Sigmoid colon (tissue), 7 donors: ENCODE measurements at regions of chr2 and their contacts with region 1.

Region 1: DNA sequence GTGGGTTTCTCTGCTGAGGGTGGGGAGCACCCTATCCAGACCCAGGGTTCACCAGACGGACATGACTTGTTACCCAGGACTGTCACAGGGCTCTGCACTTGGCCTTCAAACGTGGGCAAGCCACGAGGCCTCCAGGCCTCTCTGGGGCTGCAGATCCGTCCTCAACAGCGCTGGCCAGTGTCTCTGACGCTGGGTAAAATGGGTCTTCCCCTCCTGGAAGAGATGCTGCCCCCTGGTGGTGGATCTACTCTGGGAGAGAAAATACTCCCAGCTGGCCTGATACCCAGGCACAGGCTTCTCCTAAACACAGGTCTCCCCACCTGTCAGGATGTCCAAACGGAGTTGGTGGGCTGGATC is 3.7 kb downstream of the GPR17 start:
- DNase-seq: peak; percentile 94
- H3K4me3 ChIP-seq: peak overlapping the region in 2 of 4 donors; percentile 8 to 36
- H3K27ac ChIP-seq: peak overlapping the region; percentile 86 to 97 (median 92)
- H3K4me1 ChIP-seq: peaks cover 0 to 99% (median 94%) of the 10 kb centered on the region in 4 donors
- H3K27me3 ChIP-seq: no peaks in the 10 kb centered on the region
- CTCF ChIP-seq: peak in 3 of 4 experiments; percentile 74 to 82 (median 80)
- EP300 ChIP-seq: no peak
- POLR2A ChIP-seq: no peak

Region 2: GRCh38 chr2:127576433-127577207 is 73.0 kb before region 1 on chr2:
- intact Hi-C with region 1: no loop called
- DNase-seq: peak; percentile 75
- H3K4me3 ChIP-seq: no peak overlapping the region
- H3K27ac ChIP-seq: peak overlapping the region in 1 of 4 donors; percentile 42
- H3K4me1 ChIP-seq: peaks cover 0 to 13% (median 8%) of the 10 kb centered on the region in 4 donors
- H3K27me3 ChIP-seq: no peaks in the 10 kb centered on the region
- CTCF ChIP-seq: no peak
- EP300 ChIP-seq: no peak
- POLR2A ChIP-seq: no peak

Region 3: GRCh38 chr2:127637725-127638252 is 11.9 kb before region 1 on chr2:
- intact Hi-C with region 1: loop called (anchors 2 kb)
- DNase-seq: no peak
- H3K4me3 ChIP-seq: no peak overlapping the region
- H3K27ac ChIP-seq: peak overlapping the region; percentile 85 to 97 (median 92)
- H3K4me1 ChIP-seq: peaks cover 0 to 95% (median 79%) of the 10 kb centered on the region in 4 donors
- H3K27me3 ChIP-seq: no peaks in the 10 kb centered on the region
- CTCF ChIP-seq: no peak
- EP300 ChIP-seq: no peak
- POLR2A ChIP-seq: no peak

Region 4: DNA sequence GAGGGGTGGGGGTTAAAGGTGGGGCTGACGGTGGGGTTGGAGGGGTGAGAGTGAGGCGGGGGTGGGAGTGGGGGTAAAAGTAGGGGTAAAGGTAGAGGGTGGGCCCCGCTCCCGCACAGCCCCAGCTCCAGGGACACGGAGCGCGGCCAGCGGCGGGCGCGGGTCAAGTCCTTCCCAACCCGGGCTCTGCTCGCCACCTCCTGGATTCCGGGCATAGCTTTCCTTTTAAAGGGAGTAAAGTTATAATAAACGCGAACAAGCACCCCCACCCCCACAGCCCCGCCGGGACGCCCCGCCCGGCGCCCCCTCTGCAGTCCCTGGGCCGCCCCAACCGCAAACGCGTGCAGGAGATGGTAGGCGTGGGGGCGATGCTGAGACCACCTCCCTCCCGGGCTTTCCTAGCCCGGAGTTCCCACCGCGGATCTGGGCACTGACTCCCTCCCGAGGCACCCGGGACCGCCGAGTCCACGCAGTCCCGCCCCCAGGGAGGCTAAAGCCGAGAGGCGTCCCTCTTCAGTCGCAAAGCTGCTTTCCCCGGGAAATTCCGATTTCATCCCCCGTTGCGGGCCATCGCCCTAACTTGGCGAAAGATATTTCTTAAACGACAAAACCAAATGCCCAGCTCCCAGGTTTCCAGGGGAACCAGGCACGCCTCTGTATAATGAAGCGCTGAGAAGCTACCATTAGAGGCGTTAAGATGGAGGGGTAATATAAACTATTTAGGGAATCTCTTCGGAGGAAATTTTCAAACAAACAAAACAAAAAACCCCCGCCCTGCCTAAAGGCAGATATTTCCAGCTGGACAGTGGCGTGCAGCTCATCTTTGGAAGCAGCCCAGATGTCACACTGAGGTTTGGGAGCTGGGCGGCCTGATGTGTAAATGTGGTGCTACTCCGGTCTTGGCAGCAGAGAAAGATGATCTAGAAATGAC is 25.9 kb after region 1 on chr2 and contains the start of gene LIMS2:
- intact Hi-C with region 1: loop called (anchors 2 kb)
- DNase-seq: peak; percentile 87
- H3K4me3 ChIP-seq: peak within 1 kb of the TSS; percentile 77 to 90 (median 84)
- H3K27ac ChIP-seq: peak within 1 kb of the TSS; percentile 96 to 97 (median 97)
- H3K4me1 ChIP-seq: peaks cover 0 to 72% (median 54%) of the 10 kb centered on the region in 4 donors
- H3K27me3 ChIP-seq: no peaks in the 10 kb centered on the region
- CTCF ChIP-seq: no peak
- EP300 ChIP-seq: peak in 1 of 4 donors; percentile 6
- POLR2A ChIP-seq: no peak
- total RNA-seq, gene LIMS2: 125 to 357 (median 195) TPM

Region 5: DNA sequence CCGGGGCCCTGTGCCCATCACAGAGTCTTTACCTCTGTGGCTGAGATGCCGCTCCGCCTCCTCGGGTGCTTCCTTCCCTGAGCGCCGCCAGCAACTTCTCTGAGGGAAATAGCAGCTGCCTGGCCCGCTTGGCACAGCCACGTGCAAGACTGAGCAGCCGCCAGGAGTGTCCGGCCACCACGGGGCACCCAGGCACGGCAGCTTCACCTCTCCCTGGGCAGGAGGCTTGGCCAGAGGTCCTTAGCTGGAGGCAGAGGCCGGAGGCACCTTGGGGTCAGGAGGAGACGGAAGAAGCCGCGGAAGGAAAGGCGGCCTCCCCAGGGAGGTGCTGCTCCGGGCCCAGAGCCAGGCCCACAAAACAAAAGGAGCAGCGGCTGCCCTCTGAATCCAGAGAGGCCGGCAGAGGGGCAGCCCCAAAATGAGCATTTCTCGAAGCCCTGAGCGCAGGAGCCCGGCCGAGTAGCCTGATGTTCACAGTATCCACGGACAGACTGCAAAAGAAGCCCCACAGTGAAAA is 31.7 kb after region 1 on chr2:
- intact Hi-C with region 1: loop called (anchors 1 kb)
- DNase-seq: peak; percentile 90
- H3K4me3 ChIP-seq: peak overlapping the region; percentile 15 to 41 (median 28)
- H3K27ac ChIP-seq: peak overlapping the region; percentile 65 to 88 (median 83)
- H3K4me1 ChIP-seq: peaks cover 0 to 96% (median 68%) of the 10 kb centered on the region in 4 donors
- H3K27me3 ChIP-seq: no peaks in the 10 kb centered on the region
- CTCF ChIP-seq: no peak
- EP300 ChIP-seq: no peak
- POLR2A ChIP-seq: no peak

Region 6: DNA sequence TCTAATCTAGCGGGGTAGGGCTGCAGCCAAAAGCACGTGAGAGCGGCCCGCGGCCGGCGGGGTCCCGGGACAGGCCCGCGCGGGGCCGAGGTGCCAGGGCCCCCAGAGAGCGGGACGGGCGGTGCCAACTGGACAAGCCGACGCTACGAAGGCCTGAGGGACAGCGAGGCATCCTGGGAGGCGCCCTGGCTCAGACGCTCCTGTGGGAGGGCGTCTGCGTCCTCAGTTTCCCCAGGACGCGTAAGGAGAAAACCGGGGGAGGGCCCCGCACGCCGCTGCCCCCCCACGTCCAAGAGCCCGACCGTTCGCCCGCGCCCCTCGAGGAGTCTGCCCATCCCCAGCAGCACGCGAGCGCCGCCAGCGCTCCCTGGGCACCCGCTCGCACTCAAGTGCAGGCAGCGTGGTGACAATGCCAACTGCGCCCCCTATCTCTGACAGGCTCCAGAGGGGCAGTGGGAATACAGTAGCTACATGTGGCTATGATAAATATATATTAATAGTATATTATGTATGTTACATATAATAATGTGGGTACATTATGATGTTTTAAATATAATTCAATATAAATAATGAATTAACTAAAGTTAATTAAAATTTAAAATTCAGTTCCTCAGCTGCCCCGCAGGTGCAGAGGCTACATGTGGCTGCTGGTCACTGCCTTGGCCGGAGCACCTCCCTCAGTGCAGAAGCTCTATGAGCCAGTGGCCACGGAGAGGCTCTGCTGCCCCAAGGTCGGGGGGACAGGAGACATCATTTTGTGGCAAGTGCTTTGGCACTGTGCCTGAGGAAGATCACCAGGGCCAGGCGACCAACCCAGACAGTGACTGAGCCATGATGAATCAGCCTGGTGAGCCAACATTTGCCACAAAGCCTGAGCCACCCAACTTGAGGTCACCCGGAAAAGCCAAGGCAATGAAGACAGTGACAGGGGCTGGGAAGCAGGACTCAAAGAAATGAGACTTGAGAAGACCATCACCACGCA is 46.1 kb after region 1 on chr2:
- intact Hi-C with region 1: loop called (anchors 5 kb)
- DNase-seq: peak; percentile 87
- H3K4me3 ChIP-seq: peak overlapping the region; percentile 20 to 53 (median 40)
- H3K27ac ChIP-seq: peak overlapping the region; percentile 59 to 83 (median 70)
- H3K4me1 ChIP-seq: peaks cover 0 to 18% (median 12%) of the 10 kb centered on the region in 4 donors
- H3K27me3 ChIP-seq: no peaks in the 10 kb centered on the region
- CTCF ChIP-seq: peak; percentile 36 to 70 (median 48)
- EP300 ChIP-seq: no peak
- POLR2A ChIP-seq: no peak